GM12878 (cell line): ENCODE measurements at regions of chr2 and their contacts with region 1.

Region 1: GRCh38 chr2:81650048-81650971 is 1345.8 kb upstream of the LRRTM1 start:
- DNase-seq: no peak
- ATAC-seq: peak; percentile 22; the same call in 2 of the 3 replicates
- H3K4me3 ChIP-seq: no peak overlapping the region
- H3K27ac ChIP-seq: no peak overlapping the region
- H3K4me1 ChIP-seq: no peaks in the 10 kb centered on the region
- H3K27me3 ChIP-seq: no peaks in the 10 kb centered on the region
- CTCF ChIP-seq: 0 out of 6 replicates have a peak, but pooled peaks of 1 of the 3 experiments have one; percentile 14
- EP300 ChIP-seq: no peak
- POLR2A ChIP-seq: no peak
- RAD21 ChIP-seq: no peak

Region 2: DNA sequence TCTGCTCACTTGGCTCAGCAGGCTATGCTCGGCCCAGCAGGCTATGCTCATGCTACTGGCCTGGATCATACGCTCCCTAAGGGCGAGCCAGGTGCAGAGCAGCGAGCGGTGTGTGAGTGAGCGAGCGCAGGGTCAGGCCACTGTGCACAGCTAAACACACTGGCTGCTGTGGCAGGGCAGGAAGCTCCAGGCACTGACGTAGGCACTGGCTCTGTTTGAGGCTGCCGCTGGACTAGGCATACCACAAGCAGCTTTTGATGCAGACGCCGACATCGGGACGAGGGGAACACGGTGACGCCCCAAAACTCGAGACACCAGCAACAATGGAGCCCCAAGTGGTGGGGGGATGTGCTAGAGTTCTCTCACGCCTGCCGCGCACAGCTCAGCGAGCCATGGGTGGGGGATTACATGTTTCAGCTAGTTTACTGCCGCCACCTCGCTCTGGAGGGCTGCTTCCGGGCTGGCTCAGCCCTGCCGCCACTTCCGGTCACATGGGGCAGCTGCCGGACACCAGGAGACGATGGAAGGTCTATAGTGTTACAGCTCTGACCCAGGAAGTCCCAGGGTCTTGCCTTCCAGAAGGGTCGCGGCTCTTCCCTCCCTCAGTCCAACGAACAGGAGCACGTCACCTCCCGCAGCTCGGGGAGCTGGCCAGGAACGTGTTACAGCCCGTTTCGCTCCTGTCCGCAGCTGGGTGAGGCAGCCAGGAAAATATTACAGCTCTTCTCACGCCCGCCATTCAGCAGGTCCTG is 168.9 kb before region 1 on chr2:
- CTCF ChIA-PET with region 1: no interaction called
- POLR2A ChIA-PET with region 1: no interaction called
- RAD21 ChIA-PET with region 1: no interaction called
- SMC1A ChIA-PET with region 1: no interaction called
- in situ Hi-C with region 1: no loop called
- intact Hi-C with region 1: no loop called
- DNase-seq: no peak
- ATAC-seq: no peak
- H3K4me3 ChIP-seq: no peak overlapping the region
- H3K27ac ChIP-seq: no peak overlapping the region
- H3K4me1 ChIP-seq: no peaks in the 10 kb centered on the region
- H3K27me3 ChIP-seq: no peaks in the 10 kb centered on the region
- CTCF ChIP-seq: no peak
- EP300 ChIP-seq: no peak
- POLR2A ChIP-seq: no peak
- RAD21 ChIP-seq: no peak

Region 3: DNA sequence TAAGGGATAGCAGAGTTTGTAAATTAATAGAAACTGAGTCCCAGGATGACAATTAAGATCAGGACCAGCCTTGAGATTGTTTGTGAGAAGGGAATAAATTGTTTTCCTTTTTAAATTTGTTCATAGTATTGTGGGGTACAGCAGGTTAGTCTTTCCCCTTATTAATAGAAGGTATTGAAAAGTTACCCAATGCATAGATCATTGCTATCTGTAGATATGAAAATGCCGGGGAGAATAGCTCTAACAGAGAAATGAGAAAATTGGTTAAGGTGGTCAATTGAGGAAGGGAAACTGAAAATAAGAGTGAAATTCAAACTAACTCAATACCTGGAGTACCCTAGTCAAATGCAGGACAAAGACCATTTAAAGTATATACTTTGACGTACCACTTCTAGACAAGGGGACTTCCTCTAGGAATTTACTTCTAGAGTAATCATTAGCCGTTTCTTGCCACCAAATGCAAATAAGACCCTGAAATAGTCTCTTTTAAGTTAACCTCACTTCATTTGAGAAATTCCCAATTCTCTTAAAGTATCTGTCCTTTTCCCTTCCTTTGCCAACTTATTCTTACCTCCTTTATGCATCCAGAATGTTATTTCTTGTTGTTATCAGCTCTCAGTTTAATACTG is 121.3 kb before region 1 on chr2:
- CTCF ChIA-PET with region 1: no interaction called
- POLR2A ChIA-PET with region 1: no interaction called
- RAD21 ChIA-PET with region 1: no interaction called
- SMC1A ChIA-PET with region 1: no interaction called
- in situ Hi-C with region 1: no loop called
- intact Hi-C with region 1: loop called (anchors 2 kb)
- DNase-seq: peak; percentile 26
- ATAC-seq: peak; percentile 93
- H3K4me3 ChIP-seq: no peak overlapping the region
- H3K27ac ChIP-seq: no peak overlapping the region
- H3K4me1 ChIP-seq: no peaks in the 10 kb centered on the region
- H3K27me3 ChIP-seq: no peaks in the 10 kb centered on the region
- CTCF ChIP-seq: no peak
- EP300 ChIP-seq: peak; percentile 75 to 84; a peak in 3 of 4 replicates
- POLR2A ChIP-seq: no peak
- RAD21 ChIP-seq: no peak

Region 4: DNA sequence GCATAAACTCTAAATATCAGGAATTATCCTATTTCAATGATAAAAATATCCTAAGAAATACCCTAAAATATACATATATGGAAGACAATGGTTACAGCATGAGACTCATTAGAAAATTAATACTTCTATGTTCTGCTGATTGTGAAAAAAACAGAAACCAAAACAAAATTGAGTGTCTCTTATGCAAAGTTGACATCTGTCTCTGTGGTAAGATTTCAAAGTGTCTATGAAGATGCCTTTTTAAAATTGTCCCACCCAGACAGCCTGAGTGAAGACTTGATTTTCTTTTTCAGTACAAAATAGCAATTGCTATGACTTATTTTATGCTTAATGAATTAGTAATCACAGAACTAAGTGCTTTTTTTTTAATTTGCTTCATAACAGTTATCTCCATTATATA is 22.6 kb after region 1 on chr2:
- CTCF ChIA-PET with region 1: no interaction called
- POLR2A ChIA-PET with region 1: interaction called, 3 read pairs
- RAD21 ChIA-PET with region 1: no interaction called
- SMC1A ChIA-PET with region 1: interaction called, 12 read pairs
- in situ Hi-C with region 1: no loop called
- intact Hi-C with region 1: no loop called
- DNase-seq: no peak
- ATAC-seq: peak; percentile 73
- H3K4me3 ChIP-seq: no peak overlapping the region
- H3K27ac ChIP-seq: no peak overlapping the region
- H3K4me1 ChIP-seq: no peaks in the 10 kb centered on the region
- H3K27me3 ChIP-seq: no peaks in the 10 kb centered on the region
- CTCF ChIP-seq: no peak
- EP300 ChIP-seq: no peak
- POLR2A ChIP-seq: no peak
- RAD21 ChIP-seq: no peak